ENCODE measurements at regions of chr4 and their contacts with region 1.

Region 1: GRCh38 chr4:56655209-56655626 is 25.9 kb downstream of the HOPX start:
- DNase-seq: peak; percentile 21
- H3K4me3 Mint-ChIP-seq: peak overlapping the region; percentile 81
- H3K27ac Mint-ChIP-seq: peak overlapping the region; percentile 62
- H3K4me1 Mint-ChIP-seq: peaks cover 51% of the 10 kb centered on the region
- H3K27me3 Mint-ChIP-seq: peaks cover 42% of the 10 kb centered on the region

Region 2: GRCh38 chr4:54863571-54864255 is 1791.5 kb before region 1 on chr4:
- CTCF ChIA-PET with region 1: no interaction called
- intact Hi-C with region 1: no loop called
- DNase-seq: no peak
- H3K4me3 Mint-ChIP-seq: no peak overlapping the region
- H3K27ac Mint-ChIP-seq: no peak overlapping the region
- H3K4me1 Mint-ChIP-seq: no peaks in the 10 kb centered on the region
- H3K27me3 Mint-ChIP-seq: no peaks in the 10 kb centered on the region

Region 3: GRCh38 chr4:56544573-56545131 is 110.6 kb before region 1 on chr4:
- CTCF ChIA-PET with region 1: interaction called, 6 read pairs
- intact Hi-C with region 1: loop called (anchors 5 kb)
- DNase-seq: peak; percentile 86
- H3K4me3 Mint-ChIP-seq: peak overlapping the region; percentile 57
- H3K27ac Mint-ChIP-seq: no peak overlapping the region
- H3K4me1 Mint-ChIP-seq: peaks cover 14% of the 10 kb centered on the region
- H3K27me3 Mint-ChIP-seq: no peaks in the 10 kb centered on the region

Region 4: GRCh38 chr4:56606385-56606784 is 48.8 kb before region 1 on chr4:
- CTCF ChIA-PET with region 1: no interaction called
- intact Hi-C with region 1: no loop called
- DNase-seq: no peak
- H3K4me3 Mint-ChIP-seq: no peak overlapping the region
- H3K27ac Mint-ChIP-seq: no peak overlapping the region
- H3K4me1 Mint-ChIP-seq: no peaks in the 10 kb centered on the region
- H3K27me3 Mint-ChIP-seq: peaks cover 7% of the 10 kb centered on the region

Region 5: GRCh38 chr4:56641494-56642051 is 13.6 kb before region 1 on chr4:
- CTCF ChIA-PET with region 1: interaction called, 6 read pairs
- intact Hi-C with region 1: loop called (anchors 1 kb)
- DNase-seq: no peak
- H3K4me3 Mint-ChIP-seq: no peak overlapping the region
- H3K27ac Mint-ChIP-seq: peak overlapping the region; percentile 60
- H3K4me1 Mint-ChIP-seq: peaks cover 17% of the 10 kb centered on the region
- H3K27me3 Mint-ChIP-seq: peaks cover 8% of the 10 kb centered on the region

Region 6: DNA sequence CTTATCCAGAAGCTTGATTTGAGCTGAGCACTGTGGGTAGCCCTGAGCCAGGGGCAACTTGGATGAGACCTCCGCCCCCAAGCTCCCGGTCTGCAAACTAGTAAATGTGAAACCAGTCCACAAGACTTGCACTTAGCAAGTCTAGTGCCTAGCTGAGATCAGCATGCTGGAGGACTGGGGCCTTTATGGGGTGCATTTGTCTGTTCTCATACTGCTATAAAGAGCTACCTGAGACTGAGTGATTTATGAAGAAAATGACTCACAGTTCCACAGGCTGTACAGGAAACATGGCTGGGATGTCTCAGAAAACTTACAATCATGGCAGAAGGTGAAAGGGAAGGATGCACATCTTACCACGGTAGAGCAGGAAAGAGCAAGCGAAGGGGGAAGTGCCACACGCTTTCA is 68.0 kb after region 1 on chr4:
- CTCF ChIA-PET with region 1: no interaction called
- intact Hi-C with region 1: loop called (anchors 1 kb)
- DNase-seq: peak; percentile 79
- H3K4me3 Mint-ChIP-seq: no peak overlapping the region
- H3K27ac Mint-ChIP-seq: peak overlapping the region; percentile 69
- H3K4me1 Mint-ChIP-seq: peaks cover 15% of the 10 kb centered on the region
- H3K27me3 Mint-ChIP-seq: no peaks in the 10 kb centered on the region

Region 7: DNA sequence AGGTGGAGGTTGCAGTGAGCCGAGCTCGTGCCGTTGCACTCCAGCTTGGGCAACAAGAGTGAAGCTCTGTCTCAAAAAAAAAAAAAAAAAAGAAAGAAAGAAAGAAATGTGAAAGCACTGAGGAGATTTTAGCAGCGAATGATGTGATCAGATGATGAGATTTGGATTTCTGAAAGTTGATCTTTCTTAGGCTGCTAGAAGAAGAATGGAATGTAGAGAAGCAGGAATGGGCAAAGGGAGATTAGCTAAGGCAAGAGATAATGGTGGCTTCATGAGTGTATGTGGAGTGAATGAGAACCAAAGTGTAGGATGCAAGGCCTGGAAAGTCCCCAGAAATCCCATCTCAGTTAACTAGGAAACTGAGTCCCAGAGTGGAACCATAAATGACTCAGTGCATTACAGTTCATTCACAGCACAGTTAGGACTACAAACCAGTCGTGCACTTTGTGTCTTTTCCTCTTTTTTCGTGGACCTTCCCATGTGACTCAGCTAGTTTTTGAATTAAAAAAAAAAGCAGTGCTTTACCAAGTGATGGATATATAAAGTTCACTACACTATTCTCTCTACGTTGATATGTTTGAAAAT is 224.7 kb after region 1 on chr4:
- CTCF ChIA-PET with region 1: no interaction called
- intact Hi-C with region 1: no loop called
- DNase-seq: no peak
- H3K4me3 Mint-ChIP-seq: no peak overlapping the region
- H3K27ac Mint-ChIP-seq: no peak overlapping the region
- H3K4me1 Mint-ChIP-seq: no peaks in the 10 kb centered on the region
- H3K27me3 Mint-ChIP-seq: peaks cover 2% of the 10 kb centered on the region

Region 8: GRCh38 chr4:56892691-56893090 is 237.5 kb after region 1 on chr4:
- CTCF ChIA-PET with region 1: no interaction called
- intact Hi-C with region 1: no loop called
- DNase-seq: no peak
- H3K4me3 Mint-ChIP-seq: no peak overlapping the region
- H3K27ac Mint-ChIP-seq: no peak overlapping the region
- H3K4me1 Mint-ChIP-seq: no peaks in the 10 kb centered on the region
- H3K27me3 Mint-ChIP-seq: no peaks in the 10 kb centered on the region

Measured in activated naive CD4-positive, alpha-beta T cell treated with anti-CD3 and anti-CD28 coated beads for 36 hours (primary cell).